GM12878 (cell line): ENCODE measurements at regions of chr17 and their contacts with region 1.

Region 1: GRCh38 chr17:31533546-31534155 is 142.2 kb downstream of the RAB11FIP4 start:
- DNase-seq: no peak
- ATAC-seq: no peak
- H3K4me3 ChIP-seq: no peak overlapping the region
- H3K27ac ChIP-seq: no peak overlapping the region
- H3K4me1 ChIP-seq: peaks cover 34% of the 10 kb centered on the region
- H3K27me3 ChIP-seq: no peaks in the 10 kb centered on the region
- CTCF ChIP-seq: peak; percentile 7 to 44 (median 16); a peak in 2 of 6 replicates
- EP300 ChIP-seq: no peak
- POLR2A ChIP-seq: no peak
- RAD21 ChIP-seq: peak; percentile 36; the same call in 1 of the 2 replicates

Region 2: GRCh38 chr17:31437720-31438420 is 95.8 kb before region 1 on chr17:
- CTCF ChIA-PET with region 1: interaction called, 25 read pairs
- POLR2A ChIA-PET with region 1: no interaction called
- RAD21 ChIA-PET with region 1: interaction called, 4 read pairs
- SMC1A ChIA-PET with region 1: interaction called, 81 read pairs
- in situ Hi-C with region 1: loop called (anchors 5 kb)
- intact Hi-C with region 1: no loop called
- DNase-seq: no peak
- ATAC-seq: no peak; the same call in 2 of the 3 replicates
- H3K4me3 ChIP-seq: no peak overlapping the region
- H3K27ac ChIP-seq: no peak overlapping the region
- H3K4me1 ChIP-seq: no peaks in the 10 kb centered on the region
- H3K27me3 ChIP-seq: no peaks in the 10 kb centered on the region
- CTCF ChIP-seq: no peak
- EP300 ChIP-seq: no peak
- POLR2A ChIP-seq: no peak
- RAD21 ChIP-seq: no peak

Region 3: DNA sequence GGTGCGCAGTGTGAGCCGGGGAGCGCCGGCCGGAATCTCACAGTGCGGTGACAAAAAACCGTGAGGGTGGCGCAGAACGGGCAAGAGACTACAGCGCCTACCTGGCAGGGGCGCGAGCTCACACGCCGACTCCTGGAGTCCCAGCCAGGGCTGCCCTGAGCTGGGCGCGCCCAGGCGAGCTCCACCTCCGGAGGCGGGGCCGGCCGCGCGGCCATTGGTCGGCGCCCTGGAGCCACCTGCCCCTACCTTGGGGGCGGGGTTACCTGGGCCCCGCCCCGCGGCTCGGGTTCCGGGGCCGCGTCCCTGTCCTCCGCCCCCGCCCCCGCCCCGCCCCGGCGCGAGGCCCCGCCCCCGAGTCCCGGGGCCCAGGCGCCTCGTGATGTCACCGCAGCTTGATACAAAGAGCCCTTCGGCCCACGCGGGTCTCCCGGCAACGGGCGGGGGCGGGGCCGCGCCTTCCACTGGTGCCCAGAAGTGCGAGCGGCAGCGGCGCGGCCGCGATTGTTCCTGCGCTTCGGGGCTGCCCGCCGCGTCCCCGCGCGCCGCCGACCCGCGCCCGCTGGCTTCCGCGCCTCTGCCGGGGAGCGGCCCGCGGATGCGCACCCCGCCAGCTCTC is 45.9 kb before region 1 on chr17:
- CTCF ChIA-PET with region 1: interaction called, 19 read pairs
- POLR2A ChIA-PET with region 1: interaction called, 13 read pairs
- RAD21 ChIA-PET with region 1: interaction called, 38 read pairs
- SMC1A ChIA-PET with region 1: interaction called, 14 read pairs
- in situ Hi-C with region 1: no loop called
- intact Hi-C with region 1: loop called (anchors 5 kb)
- DNase-seq: no peak
- ATAC-seq: peak; percentile 80
- H3K4me3 ChIP-seq: peak overlapping the region; percentile 92
- H3K27ac ChIP-seq: no peak overlapping the region
- H3K4me1 ChIP-seq: peaks cover 40% of the 10 kb centered on the region
- H3K27me3 ChIP-seq: no peaks in the 10 kb centered on the region
- CTCF ChIP-seq: peak in 1 of 3 experiments; percentile 18; a peak in 1 of 6 replicates
- EP300 ChIP-seq: no peak
- POLR2A ChIP-seq: peak; percentile 73
- RAD21 ChIP-seq: 0 out of 2 replicates have a peak, but pooled peaks have one; percentile 4

Region 4: GRCh38 chr17:31494259-31495021 is 39.2 kb before region 1 on chr17:
- CTCF ChIA-PET with region 1: interaction called, 19 read pairs
- POLR2A ChIA-PET with region 1: interaction called, 13 read pairs
- RAD21 ChIA-PET with region 1: interaction called, 38 read pairs
- SMC1A ChIA-PET with region 1: interaction called, 14 read pairs
- in situ Hi-C with region 1: no loop called
- intact Hi-C with region 1: loop called (anchors 5 kb)
- DNase-seq: peak; percentile 83
- ATAC-seq: peak; percentile 69
- H3K4me3 ChIP-seq: peak overlapping the region; percentile 56; the same call in 1 of the 2 replicates
- H3K27ac ChIP-seq: peak overlapping the region; percentile 92
- H3K4me1 ChIP-seq: peaks cover 65% of the 10 kb centered on the region
- H3K27me3 ChIP-seq: no peaks in the 10 kb centered on the region
- CTCF ChIP-seq: no peak
- EP300 ChIP-seq: peak; percentile 58 to 67; a peak in 3 of 4 replicates
- POLR2A ChIP-seq: peak; percentile 40; the same call in 1 of the 2 replicates
- RAD21 ChIP-seq: no peak

Region 5: GRCh38 chr17:31609996-31610910 is 76.6 kb after region 1 on chr17:
- CTCF ChIA-PET with region 1: no interaction called
- POLR2A ChIA-PET with region 1: no interaction called
- RAD21 ChIA-PET with region 1: no interaction called
- SMC1A ChIA-PET with region 1: no interaction called
- in situ Hi-C with region 1: no loop called
- intact Hi-C with region 1: no loop called
- DNase-seq: no peak
- ATAC-seq: no peak
- H3K4me3 ChIP-seq: no peak overlapping the region
- H3K27ac ChIP-seq: no peak overlapping the region
- H3K4me1 ChIP-seq: no peaks in the 10 kb centered on the region
- H3K27me3 ChIP-seq: peaks cover 0 to 3% of the 10 kb centered on the region in 2 experiments; a peak in 1 of 4 replicates
- CTCF ChIP-seq: no peak
- EP300 ChIP-seq: no peak
- POLR2A ChIP-seq: no peak
- RAD21 ChIP-seq: no peak

Region 6: GRCh38 chr17:31758646-31759045 is 225.0 kb after region 1 on chr17:
- CTCF ChIA-PET with region 1: no interaction called
- POLR2A ChIA-PET with region 1: no interaction called
- RAD21 ChIA-PET with region 1: no interaction called
- SMC1A ChIA-PET with region 1: no interaction called
- in situ Hi-C with region 1: no loop called
- intact Hi-C with region 1: no loop called
- DNase-seq: no peak
- ATAC-seq: no peak
- H3K4me3 ChIP-seq: no peak overlapping the region
- H3K27ac ChIP-seq: no peak overlapping the region
- H3K4me1 ChIP-seq: no peaks in the 10 kb centered on the region
- H3K27me3 ChIP-seq: no peaks in the 10 kb centered on the region
- CTCF ChIP-seq: no peak
- EP300 ChIP-seq: no peak
- POLR2A ChIP-seq: no peak
- RAD21 ChIP-seq: no peak

Region 7: GRCh38 chr17:31900877-31901276 is 367.2 kb after region 1 on chr17:
- CTCF ChIA-PET with region 1: interaction called, 21 read pairs
- POLR2A ChIA-PET with region 1: interaction called, 4 read pairs
- RAD21 ChIA-PET with region 1: interaction called, 7 read pairs
- SMC1A ChIA-PET with region 1: interaction called, 3 read pairs
- in situ Hi-C with region 1: no loop called
- intact Hi-C with region 1: no loop called
- DNase-seq: no peak
- ATAC-seq: peak; percentile 39
- H3K4me3 ChIP-seq: peak overlapping the region; percentile 72
- H3K27ac ChIP-seq: peak overlapping the region; percentile 74
- H3K4me1 ChIP-seq: peaks cover 6% of the 10 kb centered on the region
- H3K27me3 ChIP-seq: no peaks in the 10 kb centered on the region
- CTCF ChIP-seq: no peak
- EP300 ChIP-seq: no peak
- POLR2A ChIP-seq: no peak
- RAD21 ChIP-seq: no peak